GM10248 (cell line): ENCODE measurements at regions of chr16 and their contacts with region 1.

Region 1: DNA sequence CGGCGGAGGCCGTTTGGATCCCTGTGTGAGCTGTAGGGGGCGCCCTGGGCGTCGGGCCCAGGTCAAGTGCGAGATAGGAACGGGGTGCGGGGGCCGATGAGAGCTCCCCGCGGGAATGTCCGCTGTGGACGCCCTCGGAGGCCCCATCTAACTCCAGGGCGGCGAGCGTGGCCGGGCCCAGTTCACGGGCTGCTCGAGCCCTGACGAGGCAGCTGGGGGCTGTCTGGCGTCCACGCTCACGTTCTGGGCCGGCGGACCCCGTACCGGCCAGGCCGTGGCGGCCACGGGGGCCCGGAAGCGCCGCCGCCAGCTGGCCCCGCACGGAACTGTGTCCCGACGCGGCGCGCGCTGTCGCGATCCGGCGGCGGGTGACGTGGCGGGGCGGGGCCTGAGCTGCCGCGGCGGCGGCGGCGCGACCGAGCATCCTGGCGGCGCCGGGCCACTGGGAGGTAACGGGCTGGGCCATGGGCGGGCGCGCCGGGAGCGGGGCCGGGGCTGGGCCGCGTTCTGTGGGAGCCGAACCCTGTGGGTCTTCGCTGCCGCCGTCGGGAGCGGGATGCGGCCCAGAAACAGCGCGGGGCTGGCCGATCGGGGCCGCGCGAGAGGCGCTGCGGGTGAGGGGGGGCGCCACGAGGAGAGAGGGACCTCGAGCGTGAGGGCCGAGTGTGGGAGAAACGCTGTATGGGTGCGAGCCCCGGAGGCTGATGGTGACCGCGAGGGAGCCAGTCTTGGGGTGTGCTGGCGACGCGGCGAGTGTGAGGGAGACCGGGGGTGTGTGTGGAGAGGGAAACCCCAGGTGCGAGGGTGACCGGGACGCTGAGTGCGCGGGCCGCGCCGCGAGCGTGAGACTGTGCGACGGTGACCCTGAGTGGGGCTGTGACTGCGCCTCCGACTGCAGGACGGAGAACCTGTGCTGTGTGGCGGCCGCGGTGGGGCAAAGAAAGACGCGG is at the start of gene SLC7A6:
- DNase-seq: peak; percentile 90
- CTCF ChIP-seq: peak; percentile 80

Region 2: DNA sequence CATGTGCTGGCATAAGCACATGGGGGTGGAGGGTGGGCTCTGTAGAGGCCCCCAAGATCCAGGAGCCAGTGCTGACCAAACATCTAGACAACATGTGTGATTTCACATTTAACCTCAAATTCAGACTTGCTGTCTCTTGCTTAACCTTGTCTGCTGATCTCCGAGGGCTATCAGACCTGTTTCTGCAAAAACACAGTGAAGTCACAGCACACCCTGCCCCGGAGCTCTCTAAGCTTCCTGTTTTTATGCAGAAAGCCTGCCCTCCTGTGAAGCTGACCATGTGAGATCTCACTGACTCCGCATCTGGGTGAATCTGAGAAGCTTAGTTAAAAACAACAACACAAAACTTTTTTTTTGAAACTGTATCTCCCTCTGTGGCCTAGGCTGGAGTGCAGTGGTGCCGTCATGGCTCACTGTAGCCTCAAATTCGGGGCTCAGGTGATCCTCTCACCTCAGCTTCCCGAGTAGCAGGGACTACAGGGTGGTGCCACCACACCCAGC is 258.6 kb before region 1 on chr16:
- CTCF ChIA-PET with region 1: no interaction called
- POLR2A ChIA-PET with region 1: no interaction called
- DNase-seq: no peak
- CTCF ChIP-seq: no peak

Region 3: DNA sequence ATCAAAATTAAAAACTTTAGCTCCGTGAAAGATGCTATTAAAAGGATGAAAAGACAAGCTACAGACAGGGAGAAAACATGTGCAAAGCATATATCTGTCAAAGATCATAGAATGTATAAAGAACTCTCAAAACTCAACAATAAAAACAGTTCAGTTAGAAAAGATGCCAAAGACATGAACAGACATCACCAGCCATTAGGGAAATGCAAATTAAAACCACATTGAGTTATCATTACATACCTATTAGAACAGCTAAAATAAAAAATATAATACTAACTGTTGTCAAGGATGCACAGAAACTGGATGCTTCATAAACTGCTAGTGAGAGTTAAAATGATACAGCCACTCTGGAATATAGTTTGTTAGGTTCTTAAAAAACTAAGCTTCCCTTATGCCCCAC is 120.4 kb before region 1 on chr16:
- CTCF ChIA-PET with region 1: no interaction called
- POLR2A ChIA-PET with region 1: no interaction called
- DNase-seq: no peak
- CTCF ChIP-seq: no peak

Region 4: GRCh38 chr16:68179196-68179795 is 85.1 kb before region 1 on chr16:
- CTCF ChIA-PET with region 1: no interaction called
- POLR2A ChIA-PET with region 1: no interaction called
- DNase-seq: no peak
- CTCF ChIP-seq: no peak

Region 5: GRCh38 chr16:68237243-68238028 is 27.0 kb before region 1 on chr16:
- CTCF ChIA-PET with region 1: interaction called, 101 read pairs
- POLR2A ChIA-PET with region 1: no interaction called
- DNase-seq: peak; percentile 98
- CTCF ChIP-seq: no peak

Region 6: DNA sequence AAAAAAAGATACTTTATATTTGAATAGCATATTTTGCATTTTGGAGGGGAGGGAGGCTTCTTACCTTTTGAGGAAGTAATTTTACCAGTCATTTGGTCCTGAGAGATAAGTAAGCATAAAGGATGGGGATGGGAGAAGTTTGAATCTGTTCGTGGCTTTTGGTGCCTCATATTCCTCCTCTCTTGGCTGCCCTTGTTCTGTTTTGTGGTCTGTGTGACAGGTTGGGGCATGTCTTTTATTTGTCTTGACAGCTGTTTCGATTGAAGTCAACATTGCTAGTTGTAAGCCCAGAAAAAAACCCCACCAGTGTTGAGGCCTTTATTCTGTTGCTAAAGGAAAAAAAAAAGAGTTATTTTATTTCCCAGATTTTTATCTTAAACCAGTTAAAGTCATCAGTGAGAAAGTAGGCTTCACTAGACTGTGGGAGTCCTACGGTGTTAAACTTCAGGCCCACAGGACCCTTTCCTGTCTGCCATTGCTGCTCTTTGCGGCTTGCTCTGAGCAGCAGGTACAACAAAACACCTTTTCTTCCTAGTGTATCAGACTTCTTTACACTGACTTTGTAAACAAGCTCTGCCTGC is 11.3 kb after region 1 on chr16:
- CTCF ChIA-PET with region 1: interaction called, 153 read pairs
- POLR2A ChIA-PET with region 1: interaction called, 7 read pairs
- DNase-seq: peak; percentile 64
- CTCF ChIP-seq: no peak

Region 7: DNA sequence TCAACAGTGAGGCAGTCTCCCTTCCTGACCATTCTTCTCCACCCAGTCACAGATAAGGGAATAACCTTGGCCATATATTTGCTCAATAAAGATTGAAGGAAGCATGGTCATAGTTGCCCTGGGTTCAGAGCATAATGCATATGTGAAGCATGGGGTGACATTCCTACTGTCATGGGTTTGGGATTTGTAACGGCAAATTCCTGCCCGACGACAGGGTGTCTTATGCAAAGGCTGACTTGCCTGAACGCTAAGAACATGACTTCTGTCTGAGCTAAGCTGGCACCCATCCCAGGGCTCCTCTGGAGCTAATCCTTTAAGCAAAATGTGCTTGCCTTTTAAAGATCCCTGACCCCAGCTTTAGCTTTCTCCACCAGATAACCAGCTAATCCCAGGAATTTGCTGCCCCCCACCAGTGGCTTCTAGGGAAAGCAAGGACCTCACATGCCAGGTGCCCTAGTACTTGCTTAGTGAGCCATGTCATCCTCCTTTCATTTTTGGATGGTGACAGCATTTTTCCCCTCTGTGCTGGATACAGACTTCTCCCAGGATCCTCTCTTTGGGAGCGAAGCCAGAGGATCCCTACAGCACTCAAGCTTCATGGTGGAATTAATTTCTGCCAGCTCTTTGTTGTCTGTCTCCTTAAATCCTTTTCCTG is 34.6 kb after region 1 on chr16:
- CTCF ChIA-PET with region 1: interaction called, 268 read pairs
- POLR2A ChIA-PET with region 1: interaction called, 5 read pairs
- DNase-seq: no peak
- CTCF ChIP-seq: no peak

Region 8: DNA sequence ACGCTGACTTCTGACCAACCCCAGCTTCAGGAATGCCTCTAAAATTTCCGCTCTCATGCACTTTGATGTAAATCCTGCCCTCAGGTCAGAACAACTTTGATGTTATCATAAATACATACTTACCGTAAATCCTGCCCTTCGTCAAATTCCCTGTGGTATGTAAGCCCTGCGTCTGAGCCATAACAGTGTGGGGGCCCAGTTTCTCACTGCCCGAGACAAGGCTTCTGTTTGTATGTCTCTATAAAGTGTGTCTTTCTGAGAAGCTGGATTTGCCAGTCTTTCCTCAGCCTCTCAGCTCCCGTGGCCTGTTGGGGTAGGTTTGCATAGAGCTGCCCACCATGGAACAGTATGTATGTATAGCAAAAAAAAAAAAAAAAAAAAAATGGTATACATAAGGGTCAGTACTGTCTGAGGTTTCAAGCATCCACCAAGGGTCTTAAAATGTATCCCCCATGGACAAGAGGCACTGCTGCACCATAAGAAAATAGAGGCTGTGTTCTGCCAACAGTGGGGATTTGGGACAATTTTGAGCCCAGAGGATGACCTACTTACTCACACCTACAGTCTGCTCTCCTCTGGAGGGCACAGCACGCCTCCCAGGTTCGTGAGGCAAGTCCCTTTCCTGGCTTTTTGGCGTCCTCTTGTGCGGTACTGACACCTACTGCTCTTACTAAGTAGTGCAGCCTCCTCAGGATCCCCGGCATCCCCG is 63.9 kb after region 1 on chr16:
- CTCF ChIA-PET with region 1: interaction called, 619 read pairs
- POLR2A ChIA-PET with region 1: no interaction called
- DNase-seq: peak; percentile 86
- CTCF ChIP-seq: peak; percentile 90

Region 9: DNA sequence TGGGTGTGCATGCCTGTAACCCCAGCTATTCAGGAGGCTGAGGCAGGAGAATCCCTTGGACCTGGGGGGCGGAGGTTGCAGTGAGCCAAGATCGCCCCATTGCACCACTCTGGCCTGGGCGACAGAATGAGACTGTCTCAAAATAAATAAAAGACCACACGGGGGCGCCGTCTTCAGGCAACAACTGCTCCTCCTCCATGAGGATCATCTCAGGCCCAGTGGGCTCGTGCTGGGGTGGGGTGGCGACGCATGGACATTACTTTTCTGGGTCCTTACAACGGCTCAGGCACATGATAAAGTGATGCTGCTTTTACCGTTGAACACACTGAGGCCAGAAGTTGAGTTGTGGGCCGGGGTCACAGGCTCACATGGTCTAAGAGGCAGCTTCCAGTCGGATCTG is 102.6 kb after region 1 on chr16:
- CTCF ChIA-PET with region 1: interaction called, 25 read pairs
- POLR2A ChIA-PET with region 1: no interaction called
- DNase-seq: peak; percentile 62
- CTCF ChIP-seq: peak; percentile 49